Panc1 (cell line): ENCODE measurements at regions of chr22 and their contacts with region 1.

Region 1: GRCh38 chr22:37381489-37381888 is 45.8 kb downstream of the ELFN2 start:
- DNase-seq: no peak
- ATAC-seq: no peak
- H3K4me3 ChIP-seq: no peak overlapping the region
- H3K27ac ChIP-seq: no peak overlapping the region
- H3K4me1 ChIP-seq: peaks cover 12% of the 10 kb centered on the region
- H3K27me3 ChIP-seq: no peaks in the 10 kb centered on the region
- CTCF ChIP-seq: no peak

Region 2: GRCh38 chr22:35648066-35649025 is 1733.1 kb before region 1 on chr22 and contains the start of gene APOL6:
- CTCF ChIA-PET with region 1: no interaction called
- POLR2A ChIA-PET with region 1: no interaction called
- in situ Hi-C with region 1: no loop called
- intact Hi-C with region 1: no loop called
- DNase-seq: no peak
- ATAC-seq: peak; percentile 66
- H3K4me3 ChIP-seq: peak within 1 kb of the TSS; percentile 57 to 64
- H3K27ac ChIP-seq: peak within 1 kb of the TSS; percentile 99
- H3K4me1 ChIP-seq: peaks cover 22% of the 10 kb centered on the region
- H3K27me3 ChIP-seq: no peaks in the 10 kb centered on the region
- CTCF ChIP-seq: no peak
- total RNA-seq, gene APOL6: 16.4 TPM

Region 3: DNA sequence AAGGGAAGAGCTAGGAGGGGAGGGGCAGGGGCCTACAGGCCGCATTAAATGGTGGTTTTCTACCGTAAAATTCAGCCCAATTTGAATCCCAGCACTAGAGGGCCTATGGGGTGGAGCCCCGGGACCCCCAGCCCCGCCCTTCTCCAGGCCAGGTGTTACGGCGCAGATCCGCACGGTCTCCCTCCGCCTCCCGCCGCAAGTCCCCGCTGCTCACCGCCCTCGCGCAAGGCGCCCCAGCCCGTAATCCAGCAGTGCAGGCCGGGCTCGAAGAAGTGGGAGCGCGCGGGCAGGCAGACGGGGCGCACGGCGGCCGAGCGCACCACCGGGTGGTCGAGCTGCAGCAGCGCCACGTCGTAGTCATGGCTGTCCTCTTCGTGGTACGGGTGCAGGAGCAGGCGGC is 312.6 kb before region 1 on chr22:
- CTCF ChIA-PET with region 1: no interaction called
- POLR2A ChIA-PET with region 1: no interaction called
- in situ Hi-C with region 1: no loop called
- intact Hi-C with region 1: no loop called
- DNase-seq: no peak
- ATAC-seq: no peak
- H3K4me3 ChIP-seq: no peak overlapping the region
- H3K27ac ChIP-seq: no peak overlapping the region
- H3K4me1 ChIP-seq: no peaks in the 10 kb centered on the region
- H3K27me3 ChIP-seq: no peaks in the 10 kb centered on the region
- CTCF ChIP-seq: no peak

Region 4: DNA sequence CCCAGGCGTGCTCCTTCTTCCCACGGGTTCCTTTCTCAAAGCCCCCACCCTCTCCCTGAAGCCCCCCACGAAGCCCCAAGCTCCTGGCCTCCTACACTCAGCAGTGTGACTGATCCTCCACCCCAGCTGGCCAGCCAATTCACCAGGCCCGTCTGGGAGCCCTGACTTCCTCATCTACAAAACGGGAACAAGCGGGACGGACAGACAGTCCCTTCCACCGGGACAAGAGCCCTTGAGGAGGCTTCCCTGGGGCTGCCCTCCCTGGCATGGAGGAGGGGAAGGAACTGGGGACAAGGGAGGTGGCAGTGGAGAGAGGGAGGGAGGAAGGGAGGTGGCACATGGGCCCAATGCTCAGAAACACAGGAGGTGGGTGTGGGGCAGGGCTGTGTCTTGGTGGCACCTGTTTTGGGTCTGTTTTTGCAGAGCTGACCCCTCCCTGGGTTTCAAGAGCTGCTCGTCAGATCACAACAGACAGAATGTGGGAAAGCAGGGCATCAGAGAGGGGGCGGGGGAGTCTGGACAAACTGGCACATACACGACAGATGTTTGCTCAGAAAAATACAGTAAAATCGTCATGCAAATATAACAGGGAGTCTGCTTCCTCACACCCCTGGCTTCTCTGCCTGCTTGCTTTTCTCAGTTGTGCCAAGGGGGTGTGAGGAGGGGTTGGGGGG is 11.0 kb before region 1 on chr22:
- CTCF ChIA-PET with region 1: no interaction called
- POLR2A ChIA-PET with region 1: interaction called, 14 read pairs
- in situ Hi-C with region 1: no loop called
- intact Hi-C with region 1: no loop called
- DNase-seq: no peak
- ATAC-seq: no peak
- H3K4me3 ChIP-seq: no peak overlapping the region
- H3K27ac ChIP-seq: no peak overlapping the region
- H3K4me1 ChIP-seq: no peaks in the 10 kb centered on the region
- H3K27me3 ChIP-seq: no peaks in the 10 kb centered on the region
- CTCF ChIP-seq: no peak

Region 5: GRCh38 chr22:37486224-37486845 is 104.8 kb after region 1 on chr22 and contains the start of gene MFNG:
- CTCF ChIA-PET with region 1: no interaction called
- POLR2A ChIA-PET with region 1: no interaction called
- in situ Hi-C with region 1: no loop called
- intact Hi-C with region 1: no loop called
- DNase-seq: no peak
- ATAC-seq: peak; percentile 82
- H3K4me3 ChIP-seq: 0 out of 4 replicates have a peak within 1 kb of the TSS, but pooled peaks of 1 of the 2 experiments have one; percentile 1
- H3K27ac ChIP-seq: peak within 1 kb of the TSS; percentile 39; the same call in 1 of the 2 replicates
- H3K4me1 ChIP-seq: peaks cover 9% of the 10 kb centered on the region
- H3K27me3 ChIP-seq: no peaks in the 10 kb centered on the region
- CTCF ChIP-seq: no peak
- total RNA-seq, gene MFNG: 7.1 TPM

Region 6: DNA sequence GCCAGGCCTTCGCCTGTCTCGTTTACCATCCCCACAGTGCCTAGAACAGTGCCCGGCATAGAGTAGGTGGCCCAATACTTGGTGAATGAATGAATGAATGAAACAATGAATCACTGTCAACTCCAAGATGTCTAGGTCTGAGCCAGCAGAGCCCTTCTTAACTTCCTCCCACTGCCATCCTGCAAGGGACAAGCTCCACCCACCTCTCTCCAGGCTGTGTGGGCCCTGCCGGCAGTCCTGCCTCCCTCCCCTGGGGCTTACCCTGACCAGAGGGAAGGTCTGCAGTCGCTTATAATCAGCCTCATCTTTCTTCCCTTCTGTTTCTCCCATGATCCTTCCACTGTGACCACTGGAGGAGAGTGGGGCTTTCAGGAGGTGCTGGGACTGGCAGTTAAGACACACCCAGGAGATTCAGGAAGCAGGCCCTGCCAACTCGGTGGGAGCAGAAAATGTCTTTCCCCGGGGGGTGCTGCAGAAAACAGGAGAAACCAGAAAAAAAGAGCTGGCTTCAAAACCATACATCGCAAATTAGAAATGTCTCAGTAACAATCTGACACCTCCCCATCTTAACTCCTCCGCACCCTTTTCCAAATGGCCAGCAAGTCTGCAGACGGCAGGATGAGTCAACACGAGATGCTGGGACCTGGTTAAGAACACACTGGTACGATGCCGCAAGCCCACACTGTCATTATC is 1401.1 kb after region 1 on chr22:
- CTCF ChIA-PET with region 1: no interaction called
- POLR2A ChIA-PET with region 1: no interaction called
- in situ Hi-C with region 1: no loop called
- intact Hi-C with region 1: no loop called
- DNase-seq: no peak
- ATAC-seq: no peak; the same call in 1 of the 2 replicates
- H3K4me3 ChIP-seq: no peak overlapping the region
- H3K27ac ChIP-seq: no peak overlapping the region
- H3K4me1 ChIP-seq: no peaks in the 10 kb centered on the region
- H3K27me3 ChIP-seq: no peaks in the 10 kb centered on the region
- CTCF ChIP-seq: no peak